ENCODE measurements at regions of chr10 and their contacts with region 1.

Region 1: DNA sequence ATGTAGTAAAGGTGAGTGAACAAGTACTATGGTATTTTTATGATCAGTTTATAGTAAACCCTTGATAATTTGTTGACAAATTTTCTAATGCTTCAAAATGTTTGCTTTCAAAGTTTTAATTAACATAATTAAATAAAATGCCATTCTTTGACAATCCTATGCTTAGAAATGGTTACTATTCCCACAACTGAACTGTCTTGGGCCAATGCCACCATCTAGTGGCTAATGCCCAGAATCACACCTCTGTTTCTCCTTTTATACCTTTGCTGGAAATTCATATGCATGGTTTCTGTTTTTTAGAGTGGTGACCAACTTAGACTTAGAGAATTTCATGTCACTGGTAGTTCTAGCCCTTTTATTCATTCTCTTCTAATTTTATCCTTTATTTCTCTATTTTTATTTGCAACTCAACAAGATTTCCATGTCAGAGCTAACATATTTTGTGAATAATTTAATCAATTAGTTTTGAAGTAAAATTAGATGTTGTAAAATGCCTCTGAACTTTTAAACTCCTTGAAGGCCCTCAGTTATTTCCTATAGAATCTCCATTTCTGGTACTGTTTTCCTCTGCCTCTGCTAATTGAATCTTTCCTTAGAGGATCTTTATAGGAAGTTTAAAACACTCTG is 31.1 kb downstream of the PCGF5 start:
- DNase-seq: peak in 4 of 5 donors; percentile 28 to 52 (median 40)
- ATAC-seq: peak in 3 of 4 donors; percentile 63 to 78 (median 67)
- H3K4me3 ChIP-seq: no peak overlapping the region
- H3K27ac ChIP-seq: no peak overlapping the region
- H3K4me1 ChIP-seq: peaks cover 0 to 33% (median 10%) of the 10 kb centered on the region in 12 donors
- H3K27me3 ChIP-seq: no peaks in the 10 kb centered on the region
- CTCF ChIP-seq: peak; percentile 88 to 97 (median 94)
- POLR2A ChIP-seq: no peak

Region 2: GRCh38 chr10:90912174-90912573 is 339.4 kb before region 1 on chr10:
- intact Hi-C with region 1: loop called (anchors 1 to 5 kb)
- DNase-seq: no peak
- ATAC-seq: peak in 1 of 4 donors; percentile 2
- H3K4me3 ChIP-seq: no peak overlapping the region
- H3K27ac ChIP-seq: peak overlapping the region in 7 of 12 donors; percentile 1 to 36 (median 24)
- H3K4me1 ChIP-seq: peaks cover 0 to 6% (median 0%) of the 10 kb centered on the region in 12 donors
- H3K27me3 ChIP-seq: no peaks in the 10 kb centered on the region
- CTCF ChIP-seq: no peak
- POLR2A ChIP-seq: peak in 1 of 2 donors; percentile 30

Region 3: DNA sequence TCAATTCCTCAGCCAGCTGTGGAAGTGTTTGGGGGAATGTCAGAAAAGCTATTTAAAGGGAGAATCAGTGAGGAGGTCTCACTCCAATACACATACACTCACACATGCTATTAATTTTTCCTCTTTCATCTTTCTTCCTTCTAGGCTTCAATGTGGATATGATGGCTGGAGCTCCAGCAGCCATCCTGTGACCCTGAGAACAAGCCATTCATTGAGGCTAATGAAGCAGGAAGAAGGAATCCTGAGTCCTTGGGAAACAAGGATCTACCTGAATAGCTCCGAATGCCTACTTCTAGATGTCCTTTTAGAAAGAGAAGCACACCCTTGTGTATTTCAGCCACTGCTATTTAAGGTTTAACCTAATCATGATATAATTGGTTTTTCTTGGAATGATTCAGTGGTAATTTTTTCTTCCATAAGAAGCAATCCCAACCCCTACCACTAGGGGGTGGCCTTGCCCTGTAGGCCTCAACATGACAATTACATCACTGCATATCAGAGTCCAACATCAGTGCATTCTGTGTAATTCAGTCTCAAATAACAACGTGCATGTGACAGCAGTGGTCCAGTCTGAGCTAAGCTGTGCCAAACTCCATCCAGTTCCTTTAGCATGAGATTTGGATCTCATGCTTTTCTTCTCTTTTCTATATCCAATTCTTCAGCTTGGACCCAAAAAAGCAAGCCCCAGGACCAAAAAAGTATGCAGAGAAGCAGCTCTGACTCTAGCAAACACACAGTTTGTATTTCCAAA is 245.4 kb before region 1 on chr10:
- intact Hi-C with region 1: loop called in 9 of 10 experiments (anchors 1 to 5 kb)
- DNase-seq: peak in 4 of 5 donors; percentile 33 to 58 (median 44)
- ATAC-seq: peak; percentile 53 to 85 (median 71)
- H3K4me3 ChIP-seq: no peak overlapping the region
- H3K27ac ChIP-seq: peak overlapping the region in 9 of 12 donors; percentile 6 to 53 (median 36)
- H3K4me1 ChIP-seq: peaks cover 0 to 13% (median 8%) of the 10 kb centered on the region in 12 donors
- H3K27me3 ChIP-seq: no peaks in the 10 kb centered on the region
- CTCF ChIP-seq: peak; percentile 87 to 98 (median 94)
- POLR2A ChIP-seq: no peak

Region 4: GRCh38 chr10:91034494-91035159 is 216.9 kb before region 1 on chr10:
- intact Hi-C with region 1: loop called in 1 of 10 experiments (anchors 10 kb)
- DNase-seq: peak; percentile 67 to 81 (median 74)
- ATAC-seq: peak in 3 of 4 donors; percentile 66 to 76 (median 75)
- H3K4me3 ChIP-seq: no peak overlapping the region
- H3K27ac ChIP-seq: peak overlapping the region in 5 of 12 donors; percentile 4 to 65 (median 18)
- H3K4me1 ChIP-seq: peaks cover 0 to 31% (median 13%) of the 10 kb centered on the region in 12 donors
- H3K27me3 ChIP-seq: no peaks in the 10 kb centered on the region
- CTCF ChIP-seq: no peak
- POLR2A ChIP-seq: no peak

Region 5: DNA sequence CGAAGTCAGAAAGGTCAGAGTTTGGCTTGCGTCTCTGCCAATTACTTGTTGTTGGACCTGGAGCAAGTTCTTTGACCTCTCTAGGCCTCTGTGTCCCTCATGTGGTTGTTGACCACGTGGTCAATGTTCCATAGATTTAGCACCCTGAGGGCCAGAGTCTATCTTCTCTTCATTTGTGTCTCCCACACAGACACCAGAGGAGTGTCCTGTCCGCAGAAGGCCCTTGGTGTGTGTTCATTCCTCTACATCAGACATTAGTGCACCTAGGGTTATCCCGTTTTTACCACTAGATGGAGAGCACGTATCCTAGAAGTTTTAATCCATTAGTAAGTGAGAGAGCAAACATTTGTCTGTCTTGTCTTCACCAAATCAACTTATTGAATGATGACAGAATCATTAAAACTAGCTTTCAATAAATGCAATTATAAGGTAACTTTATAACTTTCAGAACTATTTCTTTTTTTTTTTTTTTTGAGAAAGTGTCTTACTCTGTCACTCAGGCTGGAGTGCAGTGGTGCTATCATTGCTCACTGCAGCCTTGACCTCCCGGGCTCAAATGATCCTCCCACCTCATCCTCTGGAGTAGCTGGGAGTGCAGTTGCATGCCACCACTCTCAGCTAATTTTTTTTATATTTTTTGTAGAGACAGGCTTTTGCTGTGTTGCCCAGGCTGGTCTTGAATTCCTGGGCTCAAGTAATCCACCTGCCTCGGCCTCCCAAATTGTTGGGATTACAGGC is 208.2 kb before region 1 on chr10:
- intact Hi-C with region 1: loop called in 9 of 10 experiments (anchors 1 to 10 kb)
- DNase-seq: peak in 1 of 5 donors; percentile 10
- ATAC-seq: peak; percentile 79 to 91 (median 89)
- H3K4me3 ChIP-seq: no peak overlapping the region
- H3K27ac ChIP-seq: no peak overlapping the region
- H3K4me1 ChIP-seq: peaks cover 0 to 21% (median 0%) of the 10 kb centered on the region in 12 donors
- H3K27me3 ChIP-seq: no peaks in the 10 kb centered on the region
- CTCF ChIP-seq: peak; percentile 22 to 66 (median 56)
- POLR2A ChIP-seq: no peak

Region 6: DNA sequence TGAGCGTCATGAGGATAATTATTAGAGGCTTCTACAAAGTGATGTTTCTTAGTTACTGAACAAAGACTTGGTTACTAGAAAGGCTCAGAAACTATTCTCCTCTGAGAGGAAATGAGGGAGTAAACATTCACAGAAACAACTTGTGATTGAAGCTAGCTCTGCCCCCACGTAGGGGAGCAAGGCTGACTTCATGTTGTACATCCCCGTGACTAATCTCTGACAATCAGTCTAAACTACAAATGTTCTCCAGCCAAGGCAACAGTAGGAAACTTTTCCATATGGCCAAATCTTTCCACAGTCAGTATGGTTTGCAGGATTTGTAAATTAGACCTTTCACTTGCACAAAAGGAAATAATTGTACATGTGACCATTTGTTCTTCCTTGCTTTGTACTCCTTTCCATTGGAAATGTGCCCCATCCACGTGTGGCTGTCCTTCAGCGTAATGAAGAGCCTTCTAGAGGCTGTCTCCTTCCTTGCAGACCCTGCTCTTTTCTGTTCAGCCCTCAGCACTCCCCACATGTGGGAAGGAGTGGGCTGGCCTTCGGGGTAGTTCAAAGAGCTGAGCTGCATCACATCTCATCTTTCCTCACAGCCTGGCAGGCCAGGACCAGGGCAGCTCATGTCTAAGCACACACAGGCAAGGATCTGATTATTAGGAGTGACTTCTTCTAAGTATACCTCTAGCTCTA is 62.4 kb after region 1 on chr10:
- intact Hi-C with region 1: no loop called
- DNase-seq: no peak
- ATAC-seq: no peak
- H3K4me3 ChIP-seq: no peak overlapping the region
- H3K27ac ChIP-seq: no peak overlapping the region
- H3K4me1 ChIP-seq: no peaks in the 10 kb centered on the region
- H3K27me3 ChIP-seq: peaks cover 0 to 13% (median 0%) of the 10 kb centered on the region in 9 donors
- CTCF ChIP-seq: no peak
- POLR2A ChIP-seq: no peak